Naive thymus-derived CD4-positive, alpha-beta T cell (primary cell): ENCODE measurements at regions of chr6 and their contacts with region 1.

Region 1: DNA sequence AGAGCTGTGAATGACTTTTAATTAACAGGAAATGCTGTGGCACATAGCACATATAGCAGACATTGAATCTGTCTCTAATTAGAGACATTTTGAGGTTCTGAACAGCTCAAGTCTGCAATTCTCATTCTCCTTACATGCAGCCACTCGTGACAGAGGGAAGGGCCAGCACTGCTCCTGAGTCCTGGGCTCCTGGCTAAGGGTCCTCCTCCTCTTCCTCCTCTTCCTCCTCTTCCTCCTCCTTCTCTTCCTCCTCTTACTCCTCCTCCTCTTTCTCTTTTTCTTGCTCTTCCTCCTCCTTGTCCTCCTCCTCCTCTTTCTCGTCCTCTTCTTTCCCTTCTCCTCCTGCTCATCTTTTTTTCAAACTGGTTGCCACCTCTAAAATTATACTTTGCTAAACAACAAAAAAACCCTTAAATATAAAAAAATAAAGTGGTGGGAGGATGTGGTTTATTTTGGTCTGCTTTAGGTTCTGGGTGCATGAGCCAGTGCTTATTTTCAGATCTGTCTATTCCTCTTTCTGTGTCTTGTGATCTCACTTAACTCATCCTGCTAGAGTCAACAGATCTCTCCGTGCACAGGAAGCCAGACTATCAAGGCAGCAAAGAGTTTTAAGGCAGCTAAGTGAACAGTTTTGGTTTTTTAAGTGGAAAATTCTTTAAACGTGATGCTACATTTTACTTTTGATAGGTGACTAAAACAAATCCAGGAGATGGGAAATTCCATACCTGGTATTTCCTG is 159.3 kb downstream of the CD83 start:
- DNase-seq: peak in 7 of 9 donors; percentile 73 to 90 (median 85)
- ATAC-seq: peak; percentile 99
- H3K4me3 ChIP-seq: peak overlapping the region; percentile 34
- H3K4me3 Mint-ChIP-seq: peak overlapping the region; percentile 72 to 96 (median 80)
- H3K27ac ChIP-seq: peak overlapping the region; percentile 47
- H3K27ac Mint-ChIP-seq: peak overlapping the region; percentile 82 to 97 (median 91)
- H3K4me1 ChIP-seq: peaks cover 20 to 39% of the 10 kb centered on the region in 2 donors
- H3K4me1 Mint-ChIP-seq: peaks cover 33 to 64% (median 55%) of the 10 kb centered on the region in 7 donors
- H3K27me3 ChIP-seq: no peaks in the 10 kb centered on the region
- H3K27me3 Mint-ChIP-seq: no peaks in the 10 kb centered on the region

Region 2: GRCh38 chr6:14117158-14118090 is 159.4 kb before region 1 on chr6 and contains the start of gene CD83:
- CTCF ChIA-PET with region 1: no interaction called
- POLR2A ChIA-PET with region 1: no interaction called
- intact Hi-C with region 1: loop called in 1 of 2 experiments (anchors 10 kb)
- DNase-seq: peak; percentile 79 to 89 (median 84)
- ATAC-seq: peak; percentile 94
- H3K4me3 ChIP-seq: peak within 1 kb of the TSS; percentile 91
- H3K4me3 Mint-ChIP-seq: peak within 1 kb of the TSS; percentile 87 to 97 (median 93)
- H3K27ac ChIP-seq: peak within 1 kb of the TSS; percentile 87
- H3K27ac Mint-ChIP-seq: peak within 1 kb of the TSS; percentile 91 to 96 (median 94)
- H3K4me1 ChIP-seq: peaks cover 11 to 15% of the 10 kb centered on the region in 2 donors
- H3K4me1 Mint-ChIP-seq: peaks cover 18 to 41% (median 28%) of the 10 kb centered on the region in 7 donors
- H3K27me3 ChIP-seq: no peaks in the 10 kb centered on the region
- H3K27me3 Mint-ChIP-seq: peaks cover 0 to 35% (median 0%) of the 10 kb centered on the region in 5 donors
- total RNA-seq, gene CD83: 5.0 to 113 (median 18.3) TPM

Region 3: DNA sequence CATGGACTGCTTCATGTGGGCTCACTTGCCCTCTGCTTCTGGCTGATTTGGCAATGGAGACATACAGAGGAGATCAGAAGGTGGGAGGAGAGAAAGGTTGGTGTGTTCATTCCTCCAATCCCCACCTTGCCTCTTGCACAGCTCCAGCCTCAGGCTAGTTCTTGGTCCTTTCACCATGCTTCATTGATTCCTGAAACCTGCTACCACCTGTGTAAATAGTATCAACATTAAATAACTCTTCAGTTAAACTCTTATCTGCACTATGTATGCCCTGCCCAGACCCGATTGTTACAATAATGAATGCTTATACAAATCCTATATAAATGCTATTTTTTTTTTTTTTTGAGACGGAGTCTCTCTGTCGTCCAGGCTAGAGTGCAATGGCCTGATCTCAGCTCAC is 15.3 kb after region 1 on chr6:
- CTCF ChIA-PET with region 1: no interaction called
- POLR2A ChIA-PET with region 1: interaction called, 3 read pairs
- intact Hi-C with region 1: loop called in 1 of 2 experiments (anchors 1 kb)
- DNase-seq: no peak
- ATAC-seq: no peak
- H3K4me3 ChIP-seq: no peak overlapping the region
- H3K4me3 Mint-ChIP-seq: no peak overlapping the region
- H3K27ac ChIP-seq: no peak overlapping the region
- H3K27ac Mint-ChIP-seq: no peak overlapping the region
- H3K4me1 ChIP-seq: no peaks in the 10 kb centered on the region
- H3K4me1 Mint-ChIP-seq: peaks cover 7 to 15% (median 13%) of the 10 kb centered on the region in 7 donors
- H3K27me3 ChIP-seq: no peaks in the 10 kb centered on the region
- H3K27me3 Mint-ChIP-seq: peaks cover 0 to 3% (median 0%) of the 10 kb centered on the region in 5 donors

Region 4: GRCh38 chr6:14452567-14453527 is 176.0 kb after region 1 on chr6:
- CTCF ChIA-PET with region 1: no interaction called
- POLR2A ChIA-PET with region 1: no interaction called
- intact Hi-C with region 1: loop called in 1 of 2 experiments (anchors 2 kb)
- DNase-seq: peak in 8 of 9 donors; percentile 22 to 66 (median 50)
- ATAC-seq: peak; percentile 77
- H3K4me3 ChIP-seq: peak overlapping the region; percentile 35
- H3K4me3 Mint-ChIP-seq: peak overlapping the region; percentile 56 to 81 (median 72)
- H3K27ac ChIP-seq: no peak overlapping the region
- H3K27ac Mint-ChIP-seq: peak overlapping the region; percentile 33 to 82 (median 68)
- H3K4me1 ChIP-seq: peaks cover 23 to 41% of the 10 kb centered on the region in 2 donors
- H3K4me1 Mint-ChIP-seq: peaks cover 45 to 73% (median 64%) of the 10 kb centered on the region in 7 donors
- H3K27me3 ChIP-seq: no peaks in the 10 kb centered on the region
- H3K27me3 Mint-ChIP-seq: no peaks in the 10 kb centered on the region

Region 5: DNA sequence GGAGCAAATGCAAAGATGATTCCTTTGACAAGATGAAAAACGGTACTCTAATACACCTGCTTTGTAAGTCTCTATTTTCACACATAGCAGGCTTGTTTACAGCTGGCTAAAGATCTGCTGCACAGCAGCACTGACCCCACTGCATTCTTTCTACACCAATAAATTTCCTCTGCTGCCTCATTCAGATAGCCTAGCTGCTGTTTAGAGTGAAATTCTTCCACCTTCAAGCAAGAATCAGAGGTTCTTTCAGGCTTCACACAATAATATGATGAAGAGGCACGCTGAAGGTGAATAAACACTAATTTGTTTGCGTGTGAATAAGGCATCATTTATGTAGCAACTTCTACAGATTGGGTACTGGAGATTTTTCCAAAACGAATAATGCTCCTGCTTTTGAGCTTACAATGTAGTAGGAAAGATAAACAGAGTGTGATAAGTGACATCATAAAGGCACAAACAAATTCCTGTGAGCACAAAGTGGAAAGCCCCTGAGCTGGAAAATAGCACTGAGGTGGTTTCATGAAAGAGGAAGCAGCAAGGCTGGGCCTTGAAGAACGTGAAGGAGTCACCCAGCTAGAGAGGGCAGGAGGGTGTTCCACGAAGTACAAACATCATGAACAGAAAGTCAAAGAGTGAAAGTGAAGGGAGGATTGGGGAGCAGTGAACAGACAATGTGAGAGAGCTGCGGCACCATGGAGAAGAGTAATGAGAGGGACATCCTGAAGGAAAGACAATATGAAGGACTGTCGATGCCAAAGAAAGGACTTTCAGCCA is 384.2 kb after region 1 on chr6:
- CTCF ChIA-PET with region 1: no interaction called
- POLR2A ChIA-PET with region 1: no interaction called
- intact Hi-C with region 1: loop called (anchors 2 to 5 kb)
- DNase-seq: peak in 8 of 9 donors; percentile 41 to 77 (median 58)
- ATAC-seq: peak; percentile 84
- H3K4me3 ChIP-seq: no peak overlapping the region
- H3K4me3 Mint-ChIP-seq: no peak overlapping the region
- H3K27ac ChIP-seq: peak overlapping the region; percentile 58
- H3K27ac Mint-ChIP-seq: no peak overlapping the region
- H3K4me1 ChIP-seq: peaks cover 14 to 56% of the 10 kb centered on the region in 2 donors
- H3K4me1 Mint-ChIP-seq: peaks cover 31 to 48% (median 36%) of the 10 kb centered on the region in 7 donors
- H3K27me3 ChIP-seq: no peaks in the 10 kb centered on the region
- H3K27me3 Mint-ChIP-seq: peaks cover 0 to 18% (median 0%) of the 10 kb centered on the region in 5 donors

Region 6: GRCh38 chr6:14876778-14877613 is 600.2 kb after region 1 on chr6:
- CTCF ChIA-PET with region 1: no interaction called
- POLR2A ChIA-PET with region 1: no interaction called
- intact Hi-C with region 1: loop called (anchors 5 to 10 kb)
- DNase-seq: peak in 8 of 9 donors; percentile 1 to 65 (median 34)
- ATAC-seq: peak; percentile 88
- H3K4me3 ChIP-seq: peak overlapping the region; percentile 25
- H3K4me3 Mint-ChIP-seq: peak overlapping the region; percentile 52 to 80 (median 66)
- H3K27ac ChIP-seq: peak overlapping the region; percentile 2
- H3K27ac Mint-ChIP-seq: peak overlapping the region; percentile 43 to 92 (median 79)
- H3K4me1 ChIP-seq: peaks cover 15 to 16% of the 10 kb centered on the region in 2 donors
- H3K4me1 Mint-ChIP-seq: peaks cover 26 to 55% (median 35%) of the 10 kb centered on the region in 7 donors
- H3K27me3 ChIP-seq: no peaks in the 10 kb centered on the region
- H3K27me3 Mint-ChIP-seq: no peaks in the 10 kb centered on the region